Endothelial cell of umbilical vein (primary cell): ENCODE measurements at regions of chrX and their contacts with region 1.

Region 1: GRCh38 chrX:81201671-81202455 is at the starts of genes HMGN5 and SH3BGRL:
- DNase-seq: peak; percentile 87
- H3K4me3 ChIP-seq: peak within 1 kb of the TSS; percentile 77 to 99 (median 97)
- H3K27ac ChIP-seq: peak within 1 kb of the TSS; percentile 86
- H3K4me1 ChIP-seq: peaks cover 10% of the 10 kb centered on the region
- H3K27me3 ChIP-seq: no peaks in the 10 kb centered on the region
- CTCF ChIP-seq: no peak
- POLR2A ChIP-seq: peak; percentile 46
- total RNA-seq, gene HMGN5: 5.3 and 6.1 TPM in 2 replicates
- total RNA-seq, gene SH3BGRL: 63.3 and 65.7 TPM in 2 replicates

Region 2: DNA sequence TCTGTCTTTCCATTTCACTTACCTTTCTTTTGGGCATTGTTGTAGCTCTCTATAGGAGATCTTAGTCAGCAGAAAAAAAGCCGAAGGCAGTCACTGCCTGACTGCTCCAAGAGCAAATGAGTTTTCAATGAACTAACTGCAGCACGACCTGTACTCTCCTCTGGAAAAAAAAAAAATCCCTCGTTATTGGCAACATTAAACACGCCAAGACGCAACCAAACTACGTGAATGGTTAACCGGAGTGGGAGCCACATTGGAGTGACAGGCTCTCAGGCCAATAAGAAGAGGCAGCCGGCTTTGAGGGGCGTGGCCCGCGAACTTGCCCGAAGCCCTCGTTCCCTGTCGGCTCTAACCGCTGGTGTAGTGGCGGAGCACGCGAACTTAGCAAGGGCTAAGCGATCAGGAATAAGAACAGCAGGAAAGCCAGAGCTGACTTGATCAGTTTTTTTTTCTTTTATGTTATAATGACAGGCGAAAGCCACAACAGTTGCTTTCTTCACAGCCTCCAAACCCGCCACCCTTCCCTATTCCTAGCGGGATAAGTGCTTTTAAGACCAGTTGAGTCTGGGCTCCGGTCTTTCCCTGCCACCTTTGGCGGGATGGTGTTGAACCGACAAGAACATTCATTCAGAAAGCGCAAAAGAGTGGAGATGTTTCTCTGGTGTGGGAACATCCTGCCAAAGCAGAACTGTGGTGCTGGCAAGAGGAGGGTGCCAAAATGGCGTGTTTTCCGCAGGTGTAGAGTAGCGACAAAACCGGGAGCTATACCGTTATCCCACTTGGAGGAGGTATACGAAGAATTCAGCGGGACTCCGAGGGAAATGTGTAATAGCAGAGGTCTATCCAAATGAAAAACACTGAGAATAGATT is 80.1 kb before region 1 on chrX:
- CTCF ChIA-PET with region 1: interaction called, 6 read pairs
- POLR2A ChIA-PET with region 1: no interaction called
- dilution Hi-C with region 1: no loop called
- intact Hi-C with region 1: loop called (anchors 2 kb)
- DNase-seq: peak; percentile 95
- H3K4me3 ChIP-seq: peak overlapping the region; percentile 44 to 88 (median 48)
- H3K27ac ChIP-seq: no peak overlapping the region
- H3K4me1 ChIP-seq: peaks cover 5% of the 10 kb centered on the region
- H3K27me3 ChIP-seq: peaks cover 2 to 12% of the 10 kb centered on the region in 2 experiments
- CTCF ChIP-seq: no peak
- POLR2A ChIP-seq: no peak

Region 3: DNA sequence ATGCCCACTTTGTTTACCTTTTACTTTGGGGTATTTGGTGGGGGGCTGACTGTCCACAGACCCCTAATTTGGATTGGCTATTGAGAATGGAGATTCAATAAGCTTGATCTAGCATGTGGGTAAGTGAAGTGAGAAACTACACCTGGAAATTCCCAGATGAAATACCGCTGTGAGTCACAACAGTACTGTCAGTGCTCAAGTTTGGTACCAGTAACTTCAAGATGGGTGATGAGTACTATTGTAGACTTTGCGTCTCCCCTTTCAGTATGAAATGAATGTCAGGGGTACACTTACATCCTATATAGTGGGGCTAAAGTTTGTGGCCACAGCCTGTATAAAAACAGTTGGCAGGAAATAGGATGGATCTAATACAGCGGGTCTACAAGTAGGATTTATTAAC is 33.5 kb before region 1 on chrX:
- CTCF ChIA-PET with region 1: no interaction called
- POLR2A ChIA-PET with region 1: no interaction called
- dilution Hi-C with region 1: no loop called
- intact Hi-C with region 1: no loop called
- DNase-seq: no peak
- H3K4me3 ChIP-seq: no peak overlapping the region
- H3K27ac ChIP-seq: no peak overlapping the region
- H3K4me1 ChIP-seq: no peaks in the 10 kb centered on the region
- H3K27me3 ChIP-seq: no peaks in the 10 kb centered on the region
- CTCF ChIP-seq: no peak
- POLR2A ChIP-seq: no peak

Region 4: DNA sequence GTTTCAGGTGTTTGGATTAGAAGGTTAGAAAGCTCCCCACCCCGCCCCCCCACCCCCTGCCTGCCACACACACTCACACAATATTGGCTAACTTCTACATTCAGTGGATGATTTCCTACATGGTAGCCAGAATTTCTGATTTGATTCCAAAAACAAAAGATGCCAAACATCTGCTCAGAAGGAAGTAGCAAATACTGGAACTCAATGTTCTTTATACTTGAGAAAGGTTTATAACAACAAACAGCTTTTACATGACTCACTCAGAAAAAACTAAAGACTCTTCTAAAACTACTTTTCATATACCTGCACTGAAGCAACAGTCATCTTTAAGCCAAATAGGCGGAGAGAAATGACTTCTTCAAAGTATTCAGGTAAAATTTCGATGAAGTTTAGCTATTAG is 1555.8 kb after region 1 on chrX:
- CTCF ChIA-PET with region 1: no interaction called
- POLR2A ChIA-PET with region 1: no interaction called
- dilution Hi-C with region 1: no loop called
- intact Hi-C with region 1: loop called (anchors 10 kb)
- DNase-seq: no peak
- H3K4me3 ChIP-seq: peak overlapping the region in 1 of 3 experiments; percentile 54
- H3K27ac ChIP-seq: peak overlapping the region; percentile 60
- H3K4me1 ChIP-seq: peaks cover 7% of the 10 kb centered on the region
- H3K27me3 ChIP-seq: no peaks in the 10 kb centered on the region
- CTCF ChIP-seq: no peak
- POLR2A ChIP-seq: no peak